BJ (cell line): ENCODE measurements at regions of chr5 and their contacts with region 1.

Region 1: GRCh38 chr5:31329715-31330114 is 136.2 kb downstream of the CDH6 start:
- DNase-seq: no peak
- H3K4me3 ChIP-seq: no peak overlapping the region
- H3K27me3 ChIP-seq: no peaks in the 10 kb centered on the region
- CTCF ChIP-seq: peak; percentile 18; the same call in 1 of the 2 replicates

Region 2: DNA sequence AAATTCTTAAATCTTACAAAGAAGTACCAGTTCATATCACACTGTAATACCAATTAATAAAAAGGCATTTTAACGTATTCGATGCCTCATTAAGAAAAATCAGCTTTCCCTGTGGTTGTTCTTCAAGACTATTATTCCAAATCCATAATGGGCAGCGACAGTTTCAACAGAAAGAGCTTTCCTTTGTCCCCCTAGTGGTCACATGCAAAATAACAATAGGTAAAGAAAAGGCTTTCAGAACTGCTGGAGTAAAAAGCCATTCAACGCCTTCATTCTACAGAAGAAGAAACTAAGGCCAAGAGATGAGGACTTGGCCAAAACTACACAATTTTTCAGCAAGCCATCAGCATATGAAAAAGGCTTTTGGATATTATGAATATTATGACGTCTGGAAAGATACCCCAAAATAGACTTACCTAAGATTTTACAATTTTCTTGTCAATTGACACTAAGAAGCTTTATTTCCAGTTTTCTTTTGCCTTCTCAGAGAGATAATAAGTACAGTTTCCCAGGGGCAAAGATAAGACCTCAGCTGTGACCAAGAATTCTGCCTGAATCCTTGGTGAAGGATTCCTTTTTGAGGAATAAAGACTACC is 142.9 kb before region 1 on chr5:
- CTCF ChIA-PET with region 1: no interaction called
- POLR2A ChIA-PET with region 1: no interaction called
- DNase-seq: no peak
- H3K4me3 ChIP-seq: no peak overlapping the region
- H3K27me3 ChIP-seq: no peaks in the 10 kb centered on the region
- CTCF ChIP-seq: peak; percentile 76

Region 3: DNA sequence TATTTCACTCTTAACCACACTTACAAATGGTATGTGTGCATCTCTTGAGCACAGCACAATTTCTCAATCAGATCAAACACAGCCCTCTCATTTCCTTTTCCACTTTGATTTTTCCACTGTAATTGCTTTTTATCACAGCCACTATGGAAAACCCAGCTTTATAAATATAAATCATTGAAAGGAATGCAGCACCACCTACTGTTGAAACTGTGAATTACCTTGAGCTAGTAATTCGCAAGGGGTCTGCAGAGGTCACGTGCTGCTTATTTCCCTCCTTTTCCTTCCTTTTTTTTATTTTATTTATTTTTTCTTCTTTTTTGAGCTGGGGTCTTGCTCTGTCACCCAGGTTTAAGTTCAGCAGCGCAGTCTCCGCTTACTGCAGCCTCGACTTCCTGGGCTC is 59.3 kb before region 1 on chr5:
- CTCF ChIA-PET with region 1: no interaction called
- POLR2A ChIA-PET with region 1: interaction called, 14 read pairs
- DNase-seq: no peak
- H3K4me3 ChIP-seq: no peak overlapping the region
- H3K27me3 ChIP-seq: no peaks in the 10 kb centered on the region
- CTCF ChIP-seq: peak; percentile 45

Region 4: DNA sequence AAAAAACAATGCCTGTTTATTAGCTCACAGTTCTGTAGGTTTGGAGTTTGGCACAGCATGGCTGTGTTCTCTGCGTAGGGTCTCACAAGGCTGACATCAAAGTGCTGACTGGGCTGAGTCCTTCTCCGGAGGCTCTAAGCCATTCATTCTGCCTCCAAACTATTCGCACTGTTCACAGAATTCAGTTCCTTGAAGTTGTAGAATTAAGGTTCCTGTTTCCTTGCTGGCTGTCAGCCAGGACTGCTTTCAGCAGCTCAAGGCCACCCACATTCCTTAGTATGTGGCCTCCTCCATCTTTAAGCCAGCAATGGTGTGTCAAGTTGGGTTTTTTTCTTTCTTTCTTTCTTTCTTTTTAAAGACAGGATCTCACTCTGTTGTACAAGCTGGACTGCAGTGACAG is 25.6 kb after region 1 on chr5:
- CTCF ChIA-PET with region 1: interaction called, 3 read pairs
- POLR2A ChIA-PET with region 1: interaction called, 16 read pairs
- DNase-seq: no peak
- H3K4me3 ChIP-seq: no peak overlapping the region
- H3K27me3 ChIP-seq: no peaks in the 10 kb centered on the region
- CTCF ChIP-seq: no peak